PC-9 (cell line): ENCODE measurements at regions of chr6 and their contacts with region 1.

Region 1: GRCh38 chr6:119742188-119742803 is 392.7 kb upstream of the MAN1A1 start:
- DNase-seq: peak in 1 of 2 experiments; percentile 45
- H3K4me3 ChIP-seq: peak overlapping the region; percentile 12; the same call in 1 of the 2 replicates
- H3K27ac ChIP-seq: no peak overlapping the region
- H3K4me1 ChIP-seq: no peaks in the 10 kb centered on the region
- H3K27me3 ChIP-seq: no peaks in the 10 kb centered on the region
- CTCF ChIP-seq: peak; percentile 99

Region 2: DNA sequence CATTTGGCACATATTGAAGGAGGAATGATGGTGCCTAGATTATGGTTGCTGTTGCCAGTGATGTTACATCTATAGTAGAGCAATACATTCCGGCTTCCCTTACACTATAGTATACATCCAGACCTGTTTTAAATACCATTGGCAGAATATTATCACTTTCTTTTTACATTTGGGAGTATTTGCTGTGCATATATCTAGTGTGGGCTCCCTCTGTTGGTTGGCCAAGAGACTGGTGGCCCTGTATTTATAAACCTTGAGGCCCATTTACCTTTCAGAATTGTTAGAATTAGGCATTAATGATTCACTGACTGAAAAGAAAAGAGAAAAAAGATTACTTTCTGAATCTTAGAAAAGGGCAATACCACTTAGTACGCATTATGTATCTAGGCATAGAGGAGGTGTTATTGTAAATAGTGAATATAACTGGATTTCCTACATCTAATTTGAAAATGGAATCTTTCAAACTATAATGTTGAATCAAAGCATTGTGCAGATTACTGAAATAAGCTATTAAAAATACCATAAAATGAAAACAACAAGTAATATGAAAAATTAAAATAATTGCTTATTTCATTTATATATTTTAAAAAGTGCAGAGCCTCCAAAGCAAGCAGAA is 236.1 kb after region 1 on chr6:
- CTCF ChIA-PET with region 1: no interaction called
- POLR2A ChIA-PET with region 1: no interaction called
- intact Hi-C with region 1: loop called (anchors 5 kb)
- DNase-seq: no peak
- H3K4me3 ChIP-seq: no peak overlapping the region
- H3K27ac ChIP-seq: no peak overlapping the region
- H3K4me1 ChIP-seq: no peaks in the 10 kb centered on the region
- H3K27me3 ChIP-seq: no peaks in the 10 kb centered on the region
- CTCF ChIP-seq: peak; percentile 81

Region 3: GRCh38 chr6:120228297-120228696 is 486.0 kb after region 1 on chr6:
- CTCF ChIA-PET with region 1: no interaction called
- POLR2A ChIA-PET with region 1: no interaction called
- intact Hi-C with region 1: loop called (anchors 10 kb)
- DNase-seq: no peak
- H3K4me3 ChIP-seq: no peak overlapping the region
- H3K27ac ChIP-seq: no peak overlapping the region
- H3K4me1 ChIP-seq: no peaks in the 10 kb centered on the region
- H3K27me3 ChIP-seq: no peaks in the 10 kb centered on the region
- CTCF ChIP-seq: no peak

Region 4: DNA sequence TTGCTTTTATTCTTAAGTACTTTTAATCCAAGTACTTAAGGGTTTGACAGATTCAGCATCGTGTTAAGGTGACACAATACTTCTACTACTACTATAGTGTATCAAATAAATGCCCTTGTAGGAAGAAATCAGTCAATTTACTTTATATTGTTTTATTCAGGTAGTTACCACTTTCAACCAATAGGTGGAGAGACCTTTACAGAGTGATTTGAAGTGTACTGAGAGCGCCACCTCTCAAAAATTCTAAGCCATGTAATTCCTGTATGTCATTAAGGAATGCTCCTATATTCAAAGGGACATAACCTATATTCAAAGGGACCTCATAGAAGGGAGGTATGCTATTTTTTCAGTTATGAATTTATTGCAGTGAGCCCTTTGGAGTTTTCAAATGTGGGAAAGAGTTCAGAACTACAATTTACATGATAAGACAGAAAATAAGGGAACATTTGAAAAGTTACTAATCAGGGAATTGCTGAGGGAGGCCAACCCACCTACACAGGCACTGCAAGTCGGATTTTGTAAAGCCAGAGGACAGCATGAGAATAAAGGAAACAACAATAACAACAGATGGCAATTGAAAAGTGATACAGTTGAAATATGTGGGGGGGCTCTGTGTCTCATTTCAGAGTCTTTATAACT is 636.4 kb after region 1 on chr6:
- CTCF ChIA-PET with region 1: no interaction called
- POLR2A ChIA-PET with region 1: no interaction called
- intact Hi-C with region 1: loop called (anchors 10 kb)
- DNase-seq: peak in 1 of 2 experiments; percentile 47
- H3K4me3 ChIP-seq: no peak overlapping the region
- H3K27ac ChIP-seq: no peak overlapping the region
- H3K4me1 ChIP-seq: no peaks in the 10 kb centered on the region
- H3K27me3 ChIP-seq: no peaks in the 10 kb centered on the region
- CTCF ChIP-seq: peak; percentile 92